ENCODE measurements at regions of chr13 and their contacts with region 1.

Region 1: DNA sequence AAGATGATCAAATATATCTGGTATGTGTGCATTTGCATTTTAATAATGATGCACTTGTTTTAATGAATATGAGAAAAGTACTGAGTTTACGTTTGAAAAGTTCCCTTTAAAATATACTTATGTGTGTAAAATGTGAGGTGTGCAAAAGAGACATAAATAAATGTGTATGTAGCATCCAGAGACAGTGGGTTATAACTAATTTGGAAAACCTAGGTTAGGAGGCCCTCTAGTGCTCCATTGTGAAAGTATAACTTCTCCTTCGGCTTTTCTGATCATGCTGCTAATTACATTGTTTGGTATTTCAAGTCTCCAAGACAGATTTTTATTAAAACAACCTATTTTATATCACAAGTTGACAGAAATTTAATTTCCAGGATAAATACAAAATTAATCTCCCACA is 30.1 kb downstream of the SCEL start:
- DNase-seq: peak; percentile 62
- H3K4me3 Mint-ChIP-seq: no peak overlapping the region
- H3K27ac Mint-ChIP-seq: no peak overlapping the region
- H3K4me1 Mint-ChIP-seq: no peaks in the 10 kb centered on the region
- H3K27me3 Mint-ChIP-seq: peaks cover 58% of the 10 kb centered on the region
- CTCF ChIP-seq: peak; percentile 69

Region 2: DNA sequence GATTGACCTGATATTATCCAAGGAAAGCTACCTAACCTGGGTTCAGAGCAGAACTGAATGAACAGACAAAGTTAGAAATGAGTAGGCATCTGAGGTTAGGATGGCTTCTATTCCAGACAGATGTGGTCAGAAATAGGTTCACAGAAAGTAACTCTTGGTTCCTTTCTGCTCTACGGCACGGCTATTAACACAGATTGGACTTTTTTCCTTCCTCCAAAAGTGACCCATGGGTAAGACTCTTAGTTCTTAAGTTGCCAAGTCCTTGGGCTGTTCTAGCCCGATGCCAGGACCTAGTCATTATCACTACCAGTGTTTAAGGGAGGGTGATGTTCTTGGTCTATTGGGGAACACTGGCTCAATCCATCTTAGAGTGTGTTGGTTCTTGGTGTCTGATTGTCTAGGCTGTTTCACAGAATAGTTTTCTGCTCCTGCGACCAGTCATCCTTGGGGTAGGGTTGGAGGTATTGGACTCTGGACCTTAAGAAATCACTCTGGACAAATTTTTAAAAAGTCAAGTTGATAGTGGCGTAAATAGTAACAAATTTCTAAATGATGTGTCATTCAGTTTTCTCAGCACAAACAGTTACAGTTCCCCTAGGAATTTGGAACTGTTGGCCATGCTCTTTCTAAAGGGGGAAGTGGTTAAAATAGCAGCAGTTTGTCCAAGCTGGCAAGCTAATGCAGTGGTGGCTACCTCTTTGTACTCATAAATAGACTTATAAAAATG is 178.6 kb before region 1 on chr13:
- CTCF ChIA-PET with region 1: no interaction called
- POLR2A ChIA-PET with region 1: no interaction called
- intact Hi-C with region 1: no loop called
- DNase-seq: peak; percentile 57
- H3K4me3 Mint-ChIP-seq: no peak overlapping the region
- H3K27ac Mint-ChIP-seq: no peak overlapping the region
- H3K4me1 Mint-ChIP-seq: no peaks in the 10 kb centered on the region
- H3K27me3 Mint-ChIP-seq: peaks cover 96% of the 10 kb centered on the region
- CTCF ChIP-seq: no peak

Region 3: DNA sequence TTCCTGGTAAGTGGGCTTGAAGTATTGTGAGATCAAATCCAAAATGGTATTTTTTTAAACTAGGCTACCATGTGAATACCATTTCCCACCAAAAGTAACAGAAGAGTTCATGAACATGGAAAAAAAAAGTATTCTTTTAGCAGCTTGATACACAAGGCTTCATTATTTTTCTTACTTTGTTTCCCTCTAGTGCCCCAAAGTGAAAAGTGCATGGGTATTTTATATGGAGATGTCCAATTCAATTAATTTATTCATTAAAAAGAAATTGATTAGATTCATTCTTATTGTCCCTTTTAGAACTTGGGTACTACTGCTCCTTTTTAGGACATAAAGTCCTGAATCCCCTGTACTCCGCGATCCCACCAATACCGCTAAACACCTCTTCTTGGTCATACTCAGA is 58.8 kb before region 1 on chr13:
- CTCF ChIA-PET with region 1: interaction called, 4 read pairs
- POLR2A ChIA-PET with region 1: no interaction called
- intact Hi-C with region 1: loop called (anchors 5 kb)
- DNase-seq: peak; percentile 27
- H3K4me3 Mint-ChIP-seq: no peak overlapping the region
- H3K27ac Mint-ChIP-seq: no peak overlapping the region
- H3K4me1 Mint-ChIP-seq: peaks cover 18% of the 10 kb centered on the region
- H3K27me3 Mint-ChIP-seq: peaks cover 51% of the 10 kb centered on the region
- CTCF ChIP-seq: peak; percentile 26

Region 4: GRCh38 chr13:77521595-77522367 is 43.9 kb before region 1 on chr13:
- CTCF ChIA-PET with region 1: interaction called, 18 read pairs
- POLR2A ChIA-PET with region 1: no interaction called
- intact Hi-C with region 1: no loop called
- DNase-seq: peak; percentile 70
- H3K4me3 Mint-ChIP-seq: no peak overlapping the region
- H3K27ac Mint-ChIP-seq: peak overlapping the region; percentile 0
- H3K4me1 Mint-ChIP-seq: peaks cover 28% of the 10 kb centered on the region
- H3K27me3 Mint-ChIP-seq: no peaks in the 10 kb centered on the region
- CTCF ChIP-seq: no peak

Region 5: GRCh38 chr13:77584106-77584505 is 18.5 kb after region 1 on chr13:
- CTCF ChIA-PET with region 1: no interaction called
- POLR2A ChIA-PET with region 1: no interaction called
- intact Hi-C with region 1: no loop called
- DNase-seq: peak; percentile 54
- H3K4me3 Mint-ChIP-seq: no peak overlapping the region
- H3K27ac Mint-ChIP-seq: no peak overlapping the region
- H3K4me1 Mint-ChIP-seq: no peaks in the 10 kb centered on the region
- H3K27me3 Mint-ChIP-seq: peaks cover 6% of the 10 kb centered on the region
- CTCF ChIP-seq: no peak

Region 6: GRCh38 chr13:77660841-77661250 is 95.2 kb after region 1 on chr13:
- CTCF ChIA-PET with region 1: no interaction called
- POLR2A ChIA-PET with region 1: no interaction called
- intact Hi-C with region 1: no loop called
- DNase-seq: no peak
- H3K4me3 Mint-ChIP-seq: no peak overlapping the region
- H3K27ac Mint-ChIP-seq: no peak overlapping the region
- H3K4me1 Mint-ChIP-seq: no peaks in the 10 kb centered on the region
- H3K27me3 Mint-ChIP-seq: no peaks in the 10 kb centered on the region
- CTCF ChIP-seq: no peak

Measured in MCF 10A (cell line).